Transverse colon (tissue), 4 donors: ENCODE measurements at regions of chr11 and their contacts with region 1.

Region 1: DNA sequence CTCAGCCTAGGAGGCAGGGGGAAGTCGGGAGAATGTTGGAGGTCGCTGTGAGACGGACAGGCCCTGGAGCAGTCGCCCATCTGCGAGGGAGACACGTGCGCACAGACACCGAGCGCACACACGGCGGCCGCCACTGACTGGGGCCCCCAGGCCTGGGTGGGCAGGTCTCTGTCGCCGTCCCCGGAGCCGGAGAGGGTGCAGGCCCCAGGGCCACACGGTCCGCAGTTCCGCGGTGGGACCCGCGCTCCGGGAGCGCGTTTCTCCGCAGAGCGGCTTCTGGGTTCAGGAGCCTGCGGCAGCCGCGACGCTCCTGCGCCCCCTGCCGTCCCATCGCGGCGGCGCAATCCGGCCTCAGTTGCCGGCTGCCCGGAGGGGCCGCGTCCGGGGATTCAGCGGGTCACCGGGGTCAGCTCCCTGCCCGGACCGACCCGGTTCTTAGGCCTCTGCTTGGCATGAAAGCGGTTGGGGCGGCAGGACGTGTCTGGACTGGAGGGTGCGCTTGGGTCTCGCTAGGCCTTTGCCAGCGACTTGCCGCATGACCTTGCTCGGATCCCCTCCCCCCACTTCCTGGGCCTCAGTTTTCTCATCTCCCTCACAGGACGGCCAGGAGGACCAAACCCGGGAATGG is 31.2 kb downstream of the PDE2A start:
- DNase-seq: peak; percentile 63
- H3K4me3 ChIP-seq: peak overlapping the region; percentile 38 to 65 (median 56)
- H3K27ac ChIP-seq: peak overlapping the region; percentile 8 to 80 (median 52)
- H3K4me1 ChIP-seq: peaks cover 3 to 22% (median 15%) of the 10 kb centered on the region in 4 donors
- H3K27me3 ChIP-seq: peaks cover 18% of the 10 kb centered on the region
- CTCF ChIP-seq: peak; percentile 95 to 99 (median 98)
- EP300 ChIP-seq: no peak
- POLR2A ChIP-seq: no peak

Region 2: DNA sequence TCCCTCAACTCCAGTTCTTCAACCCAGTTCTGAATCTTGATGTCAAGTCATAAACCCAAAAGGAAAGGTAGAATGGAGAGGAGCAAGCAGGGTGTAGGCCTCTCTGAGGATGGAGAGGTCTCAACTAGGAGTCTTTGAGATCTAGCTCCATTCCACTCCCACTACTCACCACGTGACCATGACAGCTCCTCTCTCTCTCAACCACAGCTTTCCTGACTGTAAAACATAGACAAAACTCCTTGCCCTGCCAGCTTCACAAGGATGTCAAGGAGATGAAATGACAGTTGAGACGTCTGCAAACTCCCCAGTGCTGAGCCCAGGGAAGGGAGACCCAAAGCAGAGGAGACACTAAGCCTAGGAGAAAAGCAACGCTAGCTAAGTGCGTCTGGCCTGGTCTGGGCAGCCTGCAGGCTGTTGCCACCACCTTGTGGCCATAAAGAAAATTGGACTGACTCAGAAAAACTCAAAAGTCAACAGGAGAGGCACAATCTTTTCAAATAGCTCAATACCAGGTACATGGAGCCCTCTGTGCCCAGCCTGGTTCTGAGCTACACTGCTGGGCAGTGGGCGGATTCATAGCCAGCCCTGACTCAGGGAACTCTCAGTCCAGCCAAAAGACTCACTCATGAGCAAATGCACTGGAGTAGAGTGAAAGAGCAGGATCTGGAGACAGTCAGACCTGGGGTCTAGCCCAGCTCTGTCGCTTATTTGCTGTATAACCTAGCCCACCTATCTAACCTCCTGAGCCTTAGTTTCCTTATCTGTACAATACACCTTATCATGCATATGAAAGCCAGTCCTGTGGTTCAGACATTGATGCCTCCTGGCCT is 212.0 kb before region 1 on chr11:
- in situ Hi-C with region 1: no loop called
- intact Hi-C with region 1: no loop called
- DNase-seq: no peak
- H3K4me3 ChIP-seq: no peak overlapping the region
- H3K27ac ChIP-seq: no peak overlapping the region
- H3K4me1 ChIP-seq: peaks cover 0 to 18% (median 11%) of the 10 kb centered on the region in 4 donors
- H3K27me3 ChIP-seq: no peaks in the 10 kb centered on the region
- CTCF ChIP-seq: peak; percentile 60 to 73 (median 65)
- EP300 ChIP-seq: no peak
- POLR2A ChIP-seq: no peak

Region 3: DNA sequence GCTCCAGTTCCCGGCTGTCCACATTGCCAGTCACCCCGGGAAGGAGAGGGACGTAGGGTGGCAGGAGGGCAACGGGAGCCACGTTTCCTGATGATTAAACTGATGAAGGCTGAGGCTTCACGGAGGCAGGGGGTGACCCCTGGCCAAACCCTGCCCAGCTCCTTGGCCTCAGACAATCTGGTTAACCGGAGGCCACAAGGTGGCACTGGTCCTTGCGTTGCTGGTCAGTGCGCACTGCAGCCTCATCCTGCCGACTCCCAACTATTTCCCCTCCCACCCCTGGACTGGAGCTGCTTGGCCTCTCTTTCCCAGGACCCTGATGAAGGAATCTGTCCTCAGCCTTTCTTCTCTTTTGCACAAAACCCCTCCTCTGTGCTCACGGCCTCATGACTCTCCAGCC is 44.1 kb before region 1 on chr11:
- in situ Hi-C with region 1: no loop called
- intact Hi-C with region 1: loop called (anchors 1 kb)
- DNase-seq: peak; percentile 35
- H3K4me3 ChIP-seq: no peak overlapping the region
- H3K27ac ChIP-seq: no peak overlapping the region
- H3K4me1 ChIP-seq: peaks cover 0 to 11% (median 0%) of the 10 kb centered on the region in 4 donors
- H3K27me3 ChIP-seq: no peaks in the 10 kb centered on the region
- CTCF ChIP-seq: peak; percentile 37 to 55 (median 45)
- EP300 ChIP-seq: no peak
- POLR2A ChIP-seq: no peak

Region 4: DNA sequence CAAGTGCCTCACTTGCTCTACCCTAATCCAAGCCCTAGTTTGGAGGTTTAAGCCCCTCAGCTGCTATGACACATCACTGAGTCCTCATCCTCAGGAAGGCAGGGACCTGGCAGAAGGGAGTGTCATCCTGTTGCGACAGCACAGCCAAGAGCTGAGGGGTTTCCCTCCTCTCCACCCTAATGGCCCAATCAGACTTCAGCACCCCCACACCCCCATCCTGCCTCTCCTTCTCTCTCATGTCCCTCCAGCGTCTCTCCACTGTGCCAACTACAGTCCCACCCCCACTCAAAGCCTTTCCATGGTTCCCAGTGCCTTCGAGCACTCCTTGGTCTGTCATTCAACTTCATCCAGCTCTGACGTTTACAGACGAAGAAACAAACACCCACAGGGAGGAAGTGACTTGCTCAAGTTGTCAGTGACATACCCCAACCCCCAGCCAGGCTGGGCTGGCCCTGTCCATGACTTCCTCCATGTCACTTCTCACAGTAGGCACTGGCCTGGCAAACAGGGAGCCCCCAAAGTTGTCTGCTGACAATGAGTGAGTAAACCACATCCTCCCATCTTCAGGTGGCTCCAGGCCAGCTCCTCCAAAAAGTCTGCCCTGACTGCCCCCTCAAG is 93.6 kb after region 1 on chr11:
- in situ Hi-C with region 1: no loop called
- intact Hi-C with region 1: no loop called
- DNase-seq: no peak
- H3K4me3 ChIP-seq: no peak overlapping the region
- H3K27ac ChIP-seq: peak overlapping the region; percentile 11 to 76 (median 66)
- H3K4me1 ChIP-seq: peaks cover 4 to 48% (median 15%) of the 10 kb centered on the region in 4 donors
- H3K27me3 ChIP-seq: no peaks in the 10 kb centered on the region
- CTCF ChIP-seq: no peak
- EP300 ChIP-seq: no peak
- POLR2A ChIP-seq: no peak